PC-3 (cell line): ENCODE measurements at regions of chr2 and their contacts with region 1.

Region 1: GRCh38 chr2:156332534-156333273 is at the start of gene NR4A2:
- DNase-seq: peak; percentile 90
- ATAC-seq: peak; percentile 62
- H3K4me3 ChIP-seq: peak within 1 kb of the TSS; percentile 95
- H3K27ac ChIP-seq: peak within 1 kb of the TSS; percentile 97
- H3K4me1 ChIP-seq: peaks cover 14% of the 10 kb centered on the region; the same call in 1 of the 2 replicates
- H3K27me3 ChIP-seq: no peaks in the 10 kb centered on the region
- CTCF ChIP-seq: no peak
- total RNA-seq, gene NR4A2: 12.0 and 13.8 TPM in 2 replicates

Region 2: DNA sequence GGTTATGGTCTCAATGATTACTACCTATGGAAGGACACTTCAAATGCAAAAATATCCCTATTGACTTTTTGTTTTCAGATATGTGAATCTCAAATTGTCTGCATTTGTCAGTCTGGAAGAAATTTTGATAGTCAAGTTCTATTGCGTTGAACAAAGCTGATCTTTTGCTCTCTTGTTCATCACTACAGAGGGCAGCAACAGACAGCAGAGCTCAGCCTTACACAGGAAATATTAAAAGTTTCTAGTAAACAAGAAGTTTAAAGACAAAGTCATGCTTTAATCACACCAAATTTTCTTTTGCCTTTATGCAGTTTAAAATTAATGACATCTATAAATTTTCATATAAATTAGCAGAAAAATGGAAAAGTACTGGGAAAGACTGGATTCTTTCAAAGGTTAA is 617.7 kb before region 1 on chr2:
- CTCF ChIA-PET with region 1: no interaction called
- POLR2A ChIA-PET with region 1: no interaction called
- intact Hi-C with region 1: loop called (anchors 1 kb)
- DNase-seq: no peak
- ATAC-seq: peak; percentile 88
- H3K4me3 ChIP-seq: no peak overlapping the region
- H3K27ac ChIP-seq: no peak overlapping the region
- H3K4me1 ChIP-seq: no peaks in the 10 kb centered on the region
- H3K27me3 ChIP-seq: no peaks in the 10 kb centered on the region
- CTCF ChIP-seq: no peak

Region 3: GRCh38 chr2:156057647-156058046 is 275.1 kb before region 1 on chr2:
- CTCF ChIA-PET with region 1: no interaction called
- POLR2A ChIA-PET with region 1: no interaction called
- intact Hi-C with region 1: loop called (anchors 5 kb)
- DNase-seq: peak; percentile 93
- ATAC-seq: peak; percentile 93
- H3K4me3 ChIP-seq: peak overlapping the region; percentile 33; the same call in 1 of the 2 replicates
- H3K27ac ChIP-seq: peak overlapping the region; percentile 98
- H3K4me1 ChIP-seq: peaks cover 25% of the 10 kb centered on the region
- H3K27me3 ChIP-seq: no peaks in the 10 kb centered on the region
- CTCF ChIP-seq: no peak

Region 4: DNA sequence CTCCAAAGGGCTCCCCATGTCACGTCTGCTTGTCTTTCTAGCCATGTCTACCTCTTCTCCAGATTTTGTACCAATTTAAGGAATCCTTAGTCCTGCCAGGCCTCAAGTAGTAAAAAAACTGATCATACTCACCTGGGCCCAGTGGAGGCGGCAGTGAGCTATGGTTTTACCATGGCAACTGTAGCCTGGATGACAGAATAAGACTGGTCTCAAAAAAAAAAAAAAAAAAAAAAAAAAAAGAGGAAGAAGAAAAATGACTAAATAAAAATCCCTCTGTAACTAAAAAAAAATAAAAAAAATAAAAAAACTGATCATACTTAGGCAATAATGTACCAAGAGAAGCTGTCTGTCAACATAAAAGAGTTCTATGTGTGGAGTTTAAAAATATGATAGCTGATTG is 221.8 kb before region 1 on chr2:
- CTCF ChIA-PET with region 1: no interaction called
- POLR2A ChIA-PET with region 1: no interaction called
- intact Hi-C with region 1: loop called (anchors 2 kb)
- DNase-seq: peak; percentile 49
- ATAC-seq: peak; percentile 28; the same call in 1 of the 2 replicates
- H3K4me3 ChIP-seq: no peak overlapping the region
- H3K27ac ChIP-seq: no peak overlapping the region
- H3K4me1 ChIP-seq: peaks cover 13% of the 10 kb centered on the region
- H3K27me3 ChIP-seq: no peaks in the 10 kb centered on the region
- CTCF ChIP-seq: peak; percentile 57

Region 5: GRCh38 chr2:156182141-156182540 is 150.6 kb before region 1 on chr2:
- CTCF ChIA-PET with region 1: no interaction called
- POLR2A ChIA-PET with region 1: no interaction called
- intact Hi-C with region 1: loop called (anchors 2 kb)
- DNase-seq: peak; percentile 98
- ATAC-seq: peak; percentile 94
- H3K4me3 ChIP-seq: peak overlapping the region; percentile 54
- H3K27ac ChIP-seq: peak overlapping the region; percentile 99
- H3K4me1 ChIP-seq: peaks cover 45% of the 10 kb centered on the region
- H3K27me3 ChIP-seq: no peaks in the 10 kb centered on the region
- CTCF ChIP-seq: no peak

Region 6: DNA sequence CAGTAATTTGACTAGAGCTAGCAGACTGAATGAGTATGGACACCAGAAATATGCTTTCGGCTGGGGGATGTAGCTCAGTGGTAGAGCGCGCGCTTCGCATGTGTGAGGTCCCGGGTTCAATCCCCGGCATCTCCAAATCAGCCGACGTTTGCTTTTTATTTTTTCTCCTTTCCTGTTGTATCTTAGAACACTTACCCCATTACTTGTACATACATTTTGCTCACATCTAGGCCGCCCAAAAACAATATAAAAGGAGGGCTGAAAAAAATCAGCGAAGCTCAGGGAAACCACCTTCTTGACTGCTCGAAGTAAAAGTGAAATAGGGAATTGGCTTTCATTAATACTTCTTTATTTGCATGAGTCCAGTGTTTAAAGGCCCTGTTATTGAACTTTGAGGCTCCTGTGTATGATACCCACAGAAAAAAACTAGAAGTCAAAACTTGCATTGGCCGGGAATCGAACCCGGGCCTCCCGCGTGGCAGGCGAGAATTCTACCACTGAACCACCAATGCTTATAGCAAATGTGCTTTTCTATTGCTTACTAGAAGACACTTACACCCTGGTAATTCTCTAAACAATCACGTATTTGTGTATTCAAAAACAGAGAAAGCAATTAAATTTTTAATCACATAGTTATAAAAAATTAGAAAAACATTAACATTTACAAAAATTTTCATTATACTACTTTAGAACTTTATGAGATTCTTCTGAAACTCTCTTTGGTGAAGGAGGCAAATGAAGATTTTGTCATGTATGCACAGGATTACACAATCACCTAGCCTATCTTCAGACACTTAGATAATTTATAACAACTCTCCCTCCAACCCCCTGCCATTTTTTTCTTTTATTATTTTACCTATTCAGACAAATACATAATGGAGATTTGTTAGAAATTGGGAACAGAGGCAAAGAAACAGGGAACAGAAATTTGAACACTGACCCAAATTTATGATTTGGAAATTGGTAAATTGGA is 68.3 kb after region 1 on chr2:
- CTCF ChIA-PET with region 1: no interaction called
- POLR2A ChIA-PET with region 1: no interaction called
- intact Hi-C with region 1: loop called (anchors 1 kb)
- DNase-seq: peak; percentile 83
- ATAC-seq: peak; percentile 73
- H3K4me3 ChIP-seq: peak overlapping the region; percentile 74
- H3K27ac ChIP-seq: peak overlapping the region; percentile 91
- H3K4me1 ChIP-seq: peaks cover 21% of the 10 kb centered on the region
- H3K27me3 ChIP-seq: no peaks in the 10 kb centered on the region
- CTCF ChIP-seq: no peak